MCF 10A (cell line): ENCODE measurements at regions of chr10 and their contacts with region 1.

Region 1: GRCh38 chr10:22988581-22989360 is 60.9 kb downstream of the ARMC3 start:
- DNase-seq: peak; percentile 81
- H3K4me3 Mint-ChIP-seq: no peak overlapping the region
- H3K27ac Mint-ChIP-seq: no peak overlapping the region
- H3K4me1 Mint-ChIP-seq: no peaks in the 10 kb centered on the region
- H3K27me3 Mint-ChIP-seq: peaks cover 9% of the 10 kb centered on the region
- CTCF ChIP-seq: peak; percentile 91

Region 2: GRCh38 chr10:21989453-21990154 is 999.2 kb before region 1 on chr10:
- CTCF ChIA-PET with region 1: interaction called, 60 read pairs
- POLR2A ChIA-PET with region 1: interaction called, 3 read pairs
- intact Hi-C with region 1: loop called (anchors 1 kb)
- DNase-seq: peak; percentile 74
- H3K4me3 Mint-ChIP-seq: peak overlapping the region; percentile 5
- H3K27ac Mint-ChIP-seq: peak overlapping the region; percentile 63
- H3K4me1 Mint-ChIP-seq: peaks cover 19% of the 10 kb centered on the region
- H3K27me3 Mint-ChIP-seq: no peaks in the 10 kb centered on the region
- CTCF ChIP-seq: peak; percentile 42

Region 3: GRCh38 chr10:22316285-22317120 is 672.3 kb before region 1 on chr10 and contains the start of gene COMMD3:
- CTCF ChIA-PET with region 1: interaction called, 15 read pairs
- POLR2A ChIA-PET with region 1: interaction called, 4 read pairs
- intact Hi-C with region 1: no loop called
- DNase-seq: peak; percentile 86
- H3K4me3 Mint-ChIP-seq: peak within 1 kb of the TSS; percentile 85
- H3K27ac Mint-ChIP-seq: peak within 1 kb of the TSS; percentile 84
- H3K4me1 Mint-ChIP-seq: peaks cover 16% of the 10 kb centered on the region
- H3K27me3 Mint-ChIP-seq: no peaks in the 10 kb centered on the region
- CTCF ChIP-seq: no peak
- total RNA-seq, gene COMMD3: 69.4 and 73.4 TPM in 2 replicates

Region 4: DNA sequence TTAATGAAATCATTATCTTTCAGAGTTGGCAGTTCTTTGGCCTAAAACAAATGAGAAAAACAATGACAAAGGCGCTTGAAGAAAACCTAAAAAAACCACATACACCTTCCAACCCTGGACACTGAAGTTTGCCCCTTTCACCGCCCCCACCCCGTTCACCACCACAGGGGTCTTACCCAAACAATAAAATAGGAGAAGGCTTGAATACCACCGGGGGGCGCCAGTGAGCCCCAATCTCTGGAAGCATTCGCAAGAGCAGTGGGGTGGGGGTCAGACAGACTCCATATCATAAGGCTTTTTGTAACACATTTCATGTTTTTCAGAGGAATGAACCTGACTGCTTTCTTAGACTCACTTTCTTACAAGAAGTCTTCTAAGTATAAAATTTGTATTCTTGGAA is 438.0 kb before region 1 on chr10:
- CTCF ChIA-PET with region 1: no interaction called
- POLR2A ChIA-PET with region 1: no interaction called
- intact Hi-C with region 1: loop called (anchors 2 kb)
- DNase-seq: peak; percentile 34
- H3K4me3 Mint-ChIP-seq: no peak overlapping the region
- H3K27ac Mint-ChIP-seq: no peak overlapping the region
- H3K4me1 Mint-ChIP-seq: no peaks in the 10 kb centered on the region
- H3K27me3 Mint-ChIP-seq: no peaks in the 10 kb centered on the region
- CTCF ChIP-seq: peak; percentile 35

Region 5: DNA sequence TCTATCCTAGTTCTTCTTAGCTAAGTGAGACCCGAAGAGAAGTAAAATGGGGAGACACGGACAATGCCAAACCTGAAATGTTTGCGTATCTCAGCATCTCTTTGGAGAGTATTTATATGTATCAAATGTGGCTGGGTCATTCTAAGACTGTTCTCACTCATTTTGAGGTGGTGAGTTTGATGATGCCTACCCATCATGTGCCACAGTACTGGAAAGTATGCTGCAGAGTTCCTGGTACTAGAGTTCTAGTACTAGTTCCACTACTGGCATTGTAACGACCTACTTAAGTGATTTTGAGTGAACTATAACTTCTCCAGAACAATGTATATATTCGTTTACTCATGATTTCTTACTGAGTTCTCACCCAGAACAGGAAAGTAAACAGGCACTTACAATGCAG is 19.1 kb before region 1 on chr10:
- CTCF ChIA-PET with region 1: no interaction called
- POLR2A ChIA-PET with region 1: no interaction called
- intact Hi-C with region 1: no loop called
- DNase-seq: no peak
- H3K4me3 Mint-ChIP-seq: no peak overlapping the region
- H3K27ac Mint-ChIP-seq: no peak overlapping the region
- H3K4me1 Mint-ChIP-seq: no peaks in the 10 kb centered on the region
- H3K27me3 Mint-ChIP-seq: no peaks in the 10 kb centered on the region
- CTCF ChIP-seq: no peak

Region 6: GRCh38 chr10:23001901-23002516 is 13.2 kb after region 1 on chr10:
- CTCF ChIA-PET with region 1: interaction called, 10 read pairs
- POLR2A ChIA-PET with region 1: interaction called, 4 read pairs
- intact Hi-C with region 1: no loop called
- DNase-seq: no peak
- H3K4me3 Mint-ChIP-seq: no peak overlapping the region
- H3K27ac Mint-ChIP-seq: no peak overlapping the region
- H3K4me1 Mint-ChIP-seq: no peaks in the 10 kb centered on the region
- H3K27me3 Mint-ChIP-seq: peaks cover 76% of the 10 kb centered on the region
- CTCF ChIP-seq: no peak